HEK293 (cell line): ENCODE measurements at regions of chr17 and their contacts with region 1.

Region 1: GRCh38 chr17:16589097-16589969 is 20.3 kb upstream of the ZNF287 start:
- H3K4me3 ChIP-seq: peak overlapping the region; percentile 47
- H3K27ac ChIP-seq: no peak overlapping the region; the same call in 1 of the 2 replicates
- H3K4me1 ChIP-seq: no peaks in the 10 kb centered on the region
- CTCF ChIP-seq: peak; percentile 86

Region 2: DNA sequence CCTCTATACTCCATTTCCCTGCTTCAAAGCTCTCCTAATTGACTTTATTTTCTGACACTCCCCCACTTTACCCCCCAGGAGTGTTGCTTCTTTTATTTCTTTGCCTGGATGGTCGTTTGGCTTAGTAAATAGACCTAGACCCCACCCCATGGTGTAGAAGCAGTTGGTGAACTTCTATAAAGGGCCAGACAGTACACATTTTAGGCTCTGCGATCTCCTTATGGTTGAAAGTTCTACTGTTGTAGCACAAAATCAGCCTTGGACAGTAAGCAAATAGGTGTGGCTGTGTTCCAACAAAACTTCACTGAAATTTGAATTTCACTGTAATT is 52.2 kb before region 1 on chr17:
- CTCF ChIA-PET with region 1: interaction called, 8 read pairs
- POLR2A ChIA-PET with region 1: interaction called, 12 read pairs
- H3K4me3 ChIP-seq: no peak overlapping the region
- H3K27ac ChIP-seq: no peak overlapping the region
- H3K4me1 ChIP-seq: peaks cover 4% of the 10 kb centered on the region
- CTCF ChIP-seq: no peak

Region 3: DNA sequence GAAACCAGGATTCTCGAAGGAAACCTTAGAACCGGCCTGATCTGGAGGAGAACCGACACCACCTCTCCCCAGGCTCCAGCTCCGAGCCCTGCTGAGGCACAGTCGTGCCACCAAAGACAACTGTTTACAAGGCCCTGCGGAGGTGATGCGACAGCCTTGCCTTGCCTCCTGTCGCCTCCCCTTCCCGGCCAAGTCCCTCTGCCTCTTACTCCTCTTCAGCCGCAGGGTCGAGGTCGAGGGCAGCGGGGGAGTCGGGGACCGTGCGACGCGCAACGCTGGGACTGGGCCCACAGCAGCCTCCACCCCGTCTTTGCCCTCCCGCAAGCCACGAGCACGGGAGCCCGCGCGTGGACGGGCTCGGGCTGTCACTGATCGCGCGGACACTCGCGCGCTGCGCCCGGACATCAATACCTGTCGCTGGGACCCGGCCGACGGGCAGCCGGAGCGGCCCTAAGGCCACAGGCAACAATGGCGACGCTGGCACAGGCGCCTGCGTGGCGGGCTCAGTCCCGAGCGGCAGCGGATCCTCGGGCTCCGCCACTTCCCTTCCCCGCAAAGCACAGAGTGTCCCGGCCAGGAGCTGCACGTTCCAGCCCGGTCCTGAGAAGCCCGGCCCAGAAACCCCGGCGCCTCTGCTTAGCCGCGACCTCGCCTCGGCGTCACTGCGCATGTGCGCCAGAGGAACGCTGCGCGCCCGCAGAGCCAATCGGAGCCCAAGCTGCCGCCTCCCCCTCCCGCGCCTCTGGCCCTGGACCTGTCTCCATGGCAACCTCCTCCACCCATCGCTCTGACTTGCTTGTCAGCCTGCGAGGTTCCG is 20.6 kb before region 1 on chr17 and contains the start of gene ZNF287:
- CTCF ChIA-PET with region 1: interaction called, 18 read pairs
- POLR2A ChIA-PET with region 1: interaction called, 6 read pairs
- H3K4me3 ChIP-seq: peak within 1 kb of the TSS; percentile 60
- H3K27ac ChIP-seq: no peak within 1 kb of the TSS; the same call in 1 of the 2 replicates
- H3K4me1 ChIP-seq: peaks cover 4% of the 10 kb centered on the region
- CTCF ChIP-seq: no peak

Region 4: GRCh38 chr17:16599537-16599936 is 10.2 kb after region 1 on chr17:
- CTCF ChIA-PET with region 1: interaction called, 14 read pairs
- POLR2A ChIA-PET with region 1: interaction called, 3 read pairs
- H3K4me3 ChIP-seq: no peak overlapping the region
- H3K27ac ChIP-seq: no peak overlapping the region
- H3K4me1 ChIP-seq: no peaks in the 10 kb centered on the region
- CTCF ChIP-seq: no peak

Region 5: GRCh38 chr17:16617481-16618060 is 28.2 kb after region 1 on chr17:
- CTCF ChIA-PET with region 1: interaction called, 10 read pairs
- POLR2A ChIA-PET with region 1: no interaction called
- H3K4me3 ChIP-seq: no peak overlapping the region
- H3K27ac ChIP-seq: no peak overlapping the region
- H3K4me1 ChIP-seq: no peaks in the 10 kb centered on the region
- CTCF ChIP-seq: no peak